ENCODE measurements at regions of chr12 and their contacts with region 1.

Region 1: GRCh38 chr12:104991565-104992128 is 5.5 kb downstream of the NOPCHAP1 start:
- DNase-seq: no peak
- H3K4me3 ChIP-seq: no peak overlapping the region
- H3K27ac ChIP-seq: no peak overlapping the region
- H3K4me1 ChIP-seq: peaks cover 14% of the 10 kb centered on the region
- H3K27me3 ChIP-seq: no peaks in the 10 kb centered on the region
- CTCF ChIP-seq: no peak

Region 2: GRCh38 chr12:104865080-104865479 is 126.6 kb before region 1 on chr12:
- CTCF ChIA-PET with region 1: no interaction called
- POLR2A ChIA-PET with region 1: interaction called, 15 read pairs
- intact Hi-C with region 1: no loop called
- DNase-seq: no peak
- H3K4me3 ChIP-seq: no peak overlapping the region
- H3K27ac ChIP-seq: no peak overlapping the region
- H3K4me1 ChIP-seq: peaks cover 14% of the 10 kb centered on the region
- H3K27me3 ChIP-seq: no peaks in the 10 kb centered on the region
- CTCF ChIP-seq: no peak

Region 3: DNA sequence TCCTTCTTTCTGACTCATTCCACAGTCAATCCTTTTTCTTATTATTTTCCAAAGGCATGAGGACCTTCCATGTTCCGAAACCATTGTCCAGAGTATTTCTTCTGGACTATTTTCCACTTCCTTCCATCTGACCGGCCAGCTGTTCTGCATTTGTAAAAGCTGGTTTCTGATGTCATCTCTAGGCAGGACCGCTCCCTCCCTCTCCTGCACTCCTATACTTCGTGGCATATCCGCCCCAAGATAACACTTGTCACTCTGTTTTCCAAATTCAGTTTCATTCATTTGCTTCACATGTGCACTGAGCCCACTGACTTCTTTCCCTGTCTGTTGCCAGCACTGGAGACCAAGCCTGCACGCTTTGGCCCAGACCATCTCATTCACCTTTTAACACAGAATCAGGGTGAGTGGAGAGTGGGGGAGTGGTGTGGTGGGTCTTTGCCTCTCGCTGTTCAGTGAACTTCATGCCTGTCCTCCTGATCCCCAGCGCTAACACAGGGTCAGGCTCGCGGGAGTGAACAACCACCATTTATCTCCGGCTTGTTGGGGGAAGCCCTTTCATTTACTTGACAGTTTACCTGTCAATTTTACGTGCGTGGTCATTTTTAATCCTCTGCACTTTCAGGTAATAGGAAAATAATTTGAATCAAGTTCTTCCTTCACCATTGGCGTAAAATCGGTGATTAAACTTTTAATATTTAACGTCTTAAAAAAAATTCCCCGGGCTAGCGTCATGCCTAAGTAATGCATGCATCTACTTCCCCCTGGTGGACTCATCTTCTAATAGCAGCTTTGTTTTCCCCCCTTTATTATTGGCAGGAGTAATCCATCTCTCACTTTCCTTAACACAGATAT is 391.4 kb after region 1 on chr12:
- CTCF ChIA-PET with region 1: no interaction called
- POLR2A ChIA-PET with region 1: no interaction called
- intact Hi-C with region 1: no loop called
- DNase-seq: peak; percentile 7 to 59
- H3K4me3 ChIP-seq: no peak overlapping the region
- H3K27ac ChIP-seq: no peak overlapping the region
- H3K4me1 ChIP-seq: peaks cover 7% of the 10 kb centered on the region; the same call in 1 of the 2 replicates
- H3K27me3 ChIP-seq: 0 out of 2 replicates have a peak, but pooled peaks cover 11% of the 10 kb centered on the region
- CTCF ChIP-seq: peak; percentile 82